ENCODE measurements at regions of chr6 and their contacts with region 1.

Region 1: GRCh38 chr6:158207422-158207788 is 39.3 kb downstream of the GTF2H5 start:
- DNase-seq: peak; percentile 56
- ATAC-seq: peak; percentile 96
- H3K4me3 Mint-ChIP-seq: peak overlapping the region; percentile 24
- H3K27ac Mint-ChIP-seq: peak overlapping the region; percentile 81
- H3K4me1 Mint-ChIP-seq: peaks cover 33% of the 10 kb centered on the region
- H3K27me3 Mint-ChIP-seq: peaks cover 5% of the 10 kb centered on the region
- CTCF ChIP-seq: no peak

Region 2: DNA sequence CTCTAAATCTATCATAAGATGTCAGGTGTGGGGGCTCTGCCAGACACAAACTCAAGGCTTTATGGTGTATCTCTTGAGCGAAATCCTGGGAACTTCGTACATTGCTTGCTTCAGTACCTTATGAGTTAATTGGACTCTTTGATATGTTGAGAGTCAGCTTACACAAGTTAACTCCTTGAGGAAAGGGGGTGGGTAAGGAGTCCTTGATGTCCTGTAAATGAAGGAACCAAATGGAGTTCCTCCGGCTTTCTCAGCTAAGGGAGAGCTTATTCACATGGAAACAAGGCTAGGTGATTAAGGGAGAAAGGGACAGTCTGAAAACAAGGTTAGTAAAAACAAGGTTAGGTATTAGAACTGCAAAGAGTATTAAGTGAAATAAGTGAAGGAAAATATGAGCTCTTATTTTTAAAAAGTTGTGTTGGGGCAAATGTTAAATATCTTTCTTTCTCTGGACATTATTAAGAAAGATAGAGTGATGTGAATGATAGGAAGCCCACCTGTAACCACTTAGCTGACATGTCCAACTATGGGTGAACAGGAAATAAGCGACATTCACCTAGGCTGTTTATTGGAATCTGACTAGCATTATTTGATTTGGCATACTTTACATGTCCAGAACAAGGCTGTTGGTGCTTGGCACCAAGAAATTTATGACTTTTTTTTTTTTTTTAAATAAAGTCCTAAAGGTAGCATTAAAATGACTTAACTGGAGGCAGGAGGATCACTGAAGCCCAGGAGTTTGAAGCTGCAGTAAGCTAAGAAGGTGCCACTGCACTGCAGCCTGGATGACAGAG is 12.7 kb before region 1 on chr6:
- CTCF ChIA-PET with region 1: interaction called, 15 read pairs
- POLR2A ChIA-PET with region 1: interaction called, 4 read pairs
- intact Hi-C with region 1: no loop called
- DNase-seq: no peak
- ATAC-seq: no peak
- H3K4me3 Mint-ChIP-seq: no peak overlapping the region
- H3K27ac Mint-ChIP-seq: no peak overlapping the region
- H3K4me1 Mint-ChIP-seq: no peaks in the 10 kb centered on the region
- H3K27me3 Mint-ChIP-seq: no peaks in the 10 kb centered on the region
- CTCF ChIP-seq: no peak